ENCODE measurements at regions of chr1 and their contacts with region 1.

Region 1: DNA sequence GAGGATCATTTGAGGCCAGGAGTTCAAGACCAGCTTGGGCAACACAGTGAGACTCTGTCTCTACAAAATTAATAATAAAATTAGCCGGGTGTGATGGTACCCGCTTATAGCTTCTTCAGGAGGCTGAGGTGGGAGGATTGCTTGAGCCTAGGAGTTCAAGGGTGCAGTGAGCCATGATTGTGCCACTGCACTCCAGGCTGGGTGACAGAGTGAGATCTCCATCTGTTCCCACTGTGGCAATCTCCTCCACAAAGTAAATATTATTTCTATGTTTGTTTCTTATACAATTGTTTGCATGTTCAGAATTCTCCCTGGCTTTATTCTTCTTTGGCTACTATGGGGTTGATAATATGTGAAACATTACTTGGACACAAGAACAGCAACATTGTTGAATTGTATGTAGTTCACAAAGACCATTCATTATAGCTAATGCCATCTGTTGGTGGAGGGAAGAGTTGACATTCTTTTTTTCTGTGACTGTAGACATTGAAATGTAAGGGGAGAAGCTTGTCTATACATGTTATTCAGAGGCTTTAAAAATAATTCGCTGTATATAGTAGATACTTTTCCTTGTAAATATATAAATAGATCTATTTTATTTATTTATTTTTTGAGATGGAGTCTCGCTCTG is 47.8 kb upstream of the SRSF10 start:
- DNase-seq: no peak
- H3K4me3 ChIP-seq: no peak overlapping the region
- H3K27ac ChIP-seq: no peak overlapping the region
- H3K4me1 ChIP-seq: peaks cover 6% of the 10 kb centered on the region
- H3K27me3 ChIP-seq: no peaks in the 10 kb centered on the region
- CTCF ChIP-seq: peak; percentile 78

Region 2: GRCh38 chr1:23936481-23937176 is 91.3 kb before region 1 on chr1:
- intact Hi-C with region 1: no loop called
- DNase-seq: no peak
- H3K4me3 ChIP-seq: no peak overlapping the region
- H3K27ac ChIP-seq: no peak overlapping the region
- H3K4me1 ChIP-seq: no peaks in the 10 kb centered on the region
- H3K27me3 ChIP-seq: no peaks in the 10 kb centered on the region
- CTCF ChIP-seq: no peak

Region 3: GRCh38 chr1:23959041-23959460 is 68.9 kb before region 1 on chr1:
- intact Hi-C with region 1: loop called (anchors 5 kb)
- DNase-seq: peak; percentile 82
- H3K4me3 ChIP-seq: peak overlapping the region; percentile 87
- H3K27ac ChIP-seq: peak overlapping the region; percentile 99
- H3K4me1 ChIP-seq: peaks cover 70% of the 10 kb centered on the region
- H3K27me3 ChIP-seq: no peaks in the 10 kb centered on the region
- CTCF ChIP-seq: peak; percentile 59

Region 4: DNA sequence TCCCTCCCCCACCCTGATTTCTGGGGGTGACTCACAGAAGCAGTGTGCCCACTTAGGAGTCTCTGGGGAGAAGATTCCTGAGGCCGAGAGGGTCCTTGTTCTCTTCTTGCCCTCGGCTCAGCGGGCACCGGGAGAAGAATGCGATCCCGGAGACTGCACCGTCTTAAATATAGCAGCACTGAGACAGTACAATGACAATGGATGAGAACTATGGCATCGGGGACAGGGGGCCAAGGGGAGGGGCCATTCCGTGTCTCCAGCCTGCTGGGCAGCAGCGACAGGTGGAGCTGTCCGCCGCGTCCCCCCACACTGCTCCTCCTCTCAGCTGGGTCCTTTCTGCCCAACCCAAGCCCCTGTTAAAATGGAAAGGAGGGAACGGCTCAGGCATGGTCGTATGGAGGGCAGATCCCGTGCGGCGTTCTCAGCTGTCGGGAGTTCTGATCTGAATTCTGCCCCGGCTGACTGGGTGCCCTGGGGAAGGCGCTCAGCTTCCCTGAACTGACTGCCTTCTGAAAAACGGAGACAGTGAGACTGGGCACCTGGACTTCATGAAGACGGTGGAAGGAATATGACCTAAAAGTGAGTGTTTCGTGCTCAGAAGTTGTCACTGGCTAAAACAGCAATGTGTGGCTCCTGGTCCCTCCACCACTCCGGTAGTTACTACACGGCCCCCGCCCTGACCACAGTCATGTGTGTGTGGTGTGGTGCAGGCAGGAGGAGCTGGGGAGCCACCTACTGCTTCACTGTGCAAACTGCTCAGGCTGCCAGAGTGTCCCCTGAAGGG is 84.2 kb after region 1 on chr1 and contains the start of gene MYOM3:
- intact Hi-C with region 1: no loop called
- DNase-seq: peak; percentile 74
- H3K4me3 ChIP-seq: peak within 1 kb of the TSS; percentile 72
- H3K27ac ChIP-seq: peak within 1 kb of the TSS; percentile 96
- H3K4me1 ChIP-seq: peaks cover 45% of the 10 kb centered on the region
- H3K27me3 ChIP-seq: peaks cover 39% of the 10 kb centered on the region
- CTCF ChIP-seq: peak; percentile 62
- total RNA-seq, gene MYOM3: 440 TPM